ENCODE measurements at regions of chr6 and their contacts with region 1.

Region 1: DNA sequence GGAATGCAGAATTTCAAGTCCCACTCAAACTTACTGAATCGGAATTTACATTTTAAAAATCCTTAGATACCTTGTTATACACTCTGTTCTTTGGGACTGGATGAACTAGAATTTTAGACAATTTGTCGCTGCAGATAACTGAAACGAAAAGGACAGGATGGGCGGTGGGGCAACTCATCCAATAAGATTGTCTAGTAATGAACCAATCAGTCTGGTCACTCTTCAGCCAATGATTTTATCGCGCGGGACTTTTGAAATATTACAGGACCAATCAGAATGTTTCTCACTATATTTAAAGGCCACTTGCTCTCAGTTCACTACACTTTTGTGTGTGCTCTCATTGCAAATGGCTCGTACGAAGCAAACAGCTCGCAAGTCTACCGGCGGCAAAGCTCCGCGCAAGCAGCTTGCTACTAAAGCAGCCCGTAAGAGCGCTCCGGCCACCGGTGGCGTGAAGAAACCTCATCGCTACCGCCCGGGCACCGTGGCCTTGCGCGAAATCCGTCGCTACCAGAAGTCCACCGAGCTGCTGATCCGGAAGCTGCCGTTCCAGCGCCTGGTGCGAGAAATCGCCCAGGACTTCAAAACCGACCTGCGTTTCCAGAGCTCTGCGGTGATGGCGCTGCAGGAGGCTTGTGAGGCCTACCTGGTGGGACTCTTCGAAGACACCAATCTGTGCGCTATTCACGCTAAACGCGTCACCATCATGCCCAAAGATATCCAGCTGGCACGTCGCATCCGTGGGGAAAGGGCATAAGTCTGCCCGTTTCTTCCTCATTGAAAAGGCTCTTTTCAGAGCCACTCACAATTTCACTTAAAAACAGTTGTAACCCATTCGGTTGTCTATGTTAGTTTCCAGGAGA is 41.9 kb upstream of the HFE start:
- DNase-seq: peak; percentile 99
- ATAC-seq: peak; percentile 74
- H3K4me3 ChIP-seq: peak overlapping the region; percentile 58 to 73 (median 63)
- H3K27ac ChIP-seq: peak overlapping the region; percentile 94
- H3K4me1 ChIP-seq: peaks cover 31% of the 10 kb centered on the region
- H3K27me3 ChIP-seq: no peaks in the 10 kb centered on the region; a peak in 1 of 5 replicates
- CTCF ChIP-seq: peak; percentile 62
- EP300 ChIP-seq: peak in 1 of 2 experiments; percentile 44; a peak in 2 of 4 replicates
- POLR2A ChIP-seq: peak; percentile 98 to 100
- RAD21 ChIP-seq: peak; percentile 69

Region 2: GRCh38 chr6:26031595-26032339 is 13.5 kb before region 1 on chr6:
- CTCF ChIA-PET with region 1: no interaction called
- POLR2A ChIA-PET with region 1: interaction called, 322 read pairs
- in situ Hi-C with region 1: no loop called
- intact Hi-C with region 1: loop called (anchors 1 kb)
- DNase-seq: peak; percentile 100
- ATAC-seq: peak; percentile 79
- H3K4me3 ChIP-seq: peak overlapping the region; percentile 71 to 83 (median 82)
- H3K27ac ChIP-seq: peak overlapping the region; percentile 93
- H3K4me1 ChIP-seq: peaks cover 37% of the 10 kb centered on the region
- H3K27me3 ChIP-seq: no peaks in the 10 kb centered on the region; a peak in 1 of 5 replicates
- CTCF ChIP-seq: peak; percentile 52
- EP300 ChIP-seq: peak; percentile 40 to 80; a peak in 2 of 4 replicates
- POLR2A ChIP-seq: peak; percentile 99
- RAD21 ChIP-seq: peak; percentile 61

Region 3: GRCh38 chr6:26103770-26104456 is 58.6 kb after region 1 on chr6:
- CTCF ChIA-PET with region 1: no interaction called
- POLR2A ChIA-PET with region 1: interaction called, 68 read pairs
- in situ Hi-C with region 1: no loop called
- intact Hi-C with region 1: no loop called
- DNase-seq: peak; percentile 96
- ATAC-seq: peak; percentile 84
- H3K4me3 ChIP-seq: peak overlapping the region; percentile 64 to 79 (median 74)
- H3K27ac ChIP-seq: peak overlapping the region; percentile 92
- H3K4me1 ChIP-seq: peaks cover 29% of the 10 kb centered on the region
- H3K27me3 ChIP-seq: no peaks in the 10 kb centered on the region; a peak in 1 of 5 replicates
- CTCF ChIP-seq: peak; percentile 45
- EP300 ChIP-seq: peak; percentile 69 to 96; a peak in 3 of 4 replicates
- POLR2A ChIP-seq: peak; percentile 98 to 99
- RAD21 ChIP-seq: peak; percentile 52; the same call in 1 of the 2 replicates

Region 4: GRCh38 chr6:26187981-26188635 is 142.8 kb after region 1 on chr6:
- CTCF ChIA-PET with region 1: no interaction called
- POLR2A ChIA-PET with region 1: interaction called, 15 read pairs
- in situ Hi-C with region 1: no loop called
- intact Hi-C with region 1: no loop called
- DNase-seq: peak; percentile 76
- ATAC-seq: peak; percentile 63
- H3K4me3 ChIP-seq: peak overlapping the region; percentile 60 to 77 (median 62)
- H3K27ac ChIP-seq: peak overlapping the region; percentile 82
- H3K4me1 ChIP-seq: peaks cover 18% of the 10 kb centered on the region
- H3K27me3 ChIP-seq: no peaks in the 10 kb centered on the region
- CTCF ChIP-seq: no peak
- EP300 ChIP-seq: no peak
- POLR2A ChIP-seq: no peak
- RAD21 ChIP-seq: no peak

Region 5: GRCh38 chr6:26204332-26205165 is 159.3 kb after region 1 on chr6:
- CTCF ChIA-PET with region 1: no interaction called
- POLR2A ChIA-PET with region 1: interaction called, 110 read pairs
- in situ Hi-C with region 1: no loop called
- intact Hi-C with region 1: no loop called
- DNase-seq: peak; percentile 98
- ATAC-seq: peak; percentile 75
- H3K4me3 ChIP-seq: peak overlapping the region; percentile 62 to 95 (median 77)
- H3K27ac ChIP-seq: peak overlapping the region; percentile 87
- H3K4me1 ChIP-seq: peaks cover 36% of the 10 kb centered on the region
- H3K27me3 ChIP-seq: no peaks in the 10 kb centered on the region; a peak in 1 of 5 replicates
- CTCF ChIP-seq: peak; percentile 53
- EP300 ChIP-seq: peak in 1 of 2 experiments; percentile 89; a peak in 3 of 4 replicates
- POLR2A ChIP-seq: peak; percentile 98 to 99
- RAD21 ChIP-seq: no peak; the same call in 1 of the 2 replicates